HepG2 (cell line): ENCODE measurements at regions of chr12 and their contacts with region 1.

Region 1: DNA sequence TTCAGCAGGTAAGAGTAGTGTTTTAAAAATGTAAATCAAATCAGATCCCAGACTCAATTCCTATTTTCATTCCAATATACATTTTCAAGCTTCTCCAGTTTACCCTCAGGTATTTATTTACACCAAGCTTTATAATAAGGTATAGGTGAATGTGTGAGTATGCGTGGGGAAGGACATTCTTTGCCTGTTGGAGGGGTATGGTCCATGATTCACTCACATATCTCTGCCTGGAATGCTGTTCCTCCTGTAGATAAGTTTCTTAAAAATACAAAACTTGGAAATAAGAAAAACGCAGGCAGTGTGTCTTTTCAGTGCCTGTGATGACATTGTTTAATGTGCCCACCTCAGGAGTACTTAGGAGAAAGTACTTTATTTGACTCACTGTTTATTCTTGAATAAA is 118.6 kb downstream of the CCDC91 start:
- DNase-seq: no peak
- ATAC-seq: no peak
- H3K4me3 ChIP-seq: no peak overlapping the region
- H3K27ac ChIP-seq: no peak overlapping the region
- H3K4me1 ChIP-seq: no peaks in the 10 kb centered on the region
- H3K27me3 ChIP-seq: no peaks in the 10 kb centered on the region
- CTCF ChIP-seq: no peak
- EP300 ChIP-seq: no peak
- POLR2A ChIP-seq: no peak
- RAD21 ChIP-seq: no peak

Region 2: DNA sequence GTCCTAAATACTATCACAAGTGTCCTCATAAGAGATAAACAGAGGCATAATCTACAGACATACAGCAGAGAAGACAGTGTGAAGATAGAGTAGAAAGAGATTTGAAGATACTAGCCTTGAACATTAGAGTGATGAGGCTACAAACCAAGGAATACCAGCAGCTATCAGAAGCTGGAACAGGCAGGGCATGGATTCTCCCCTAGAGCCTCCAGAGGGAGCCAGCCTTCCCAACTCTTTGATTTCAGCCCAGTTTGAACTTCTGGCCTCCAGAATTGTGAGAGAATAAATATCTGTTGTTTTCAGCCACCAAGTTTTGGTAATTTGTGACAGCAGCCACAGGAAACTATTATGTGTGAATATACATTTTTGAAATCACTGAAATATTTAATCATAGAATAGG is 71.5 kb before region 1 on chr12:
- CTCF ChIA-PET with region 1: no interaction called
- POLR2A ChIA-PET with region 1: no interaction called
- in situ Hi-C with region 1: no loop called
- intact Hi-C with region 1: no loop called
- DNase-seq: peak; percentile 2
- ATAC-seq: peak; percentile 71
- H3K4me3 ChIP-seq: no peak overlapping the region
- H3K27ac ChIP-seq: no peak overlapping the region
- H3K4me1 ChIP-seq: no peaks in the 10 kb centered on the region
- H3K27me3 ChIP-seq: no peaks in the 10 kb centered on the region
- CTCF ChIP-seq: peak; percentile 45; the same call in 1 of the 2 replicates
- EP300 ChIP-seq: no peak
- POLR2A ChIP-seq: no peak
- RAD21 ChIP-seq: no peak

Region 3: DNA sequence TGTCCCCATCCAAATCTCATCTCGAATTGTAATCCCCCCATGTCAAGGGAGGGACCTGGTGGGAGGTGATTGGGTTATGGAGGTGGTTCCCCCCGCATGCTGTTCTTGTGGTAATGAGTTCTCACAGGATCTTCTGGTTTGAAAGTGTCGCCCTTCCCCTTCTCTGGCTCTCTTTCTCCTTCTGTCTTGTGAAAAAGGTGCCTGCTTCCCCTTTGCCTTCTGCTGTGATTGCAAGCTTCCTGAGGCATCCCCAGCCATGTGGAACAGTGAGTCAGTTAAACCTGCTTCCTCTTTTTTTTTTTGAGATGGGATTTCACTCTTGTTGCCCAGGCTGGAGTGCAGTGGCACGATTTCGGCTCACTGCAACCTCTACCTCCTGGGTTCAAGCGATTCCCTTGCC is 14.6 kb before region 1 on chr12:
- CTCF ChIA-PET with region 1: no interaction called
- POLR2A ChIA-PET with region 1: no interaction called
- in situ Hi-C with region 1: no loop called
- intact Hi-C with region 1: loop called (anchors 1 kb)
- DNase-seq: no peak
- ATAC-seq: no peak
- H3K4me3 ChIP-seq: no peak overlapping the region
- H3K27ac ChIP-seq: no peak overlapping the region
- H3K4me1 ChIP-seq: no peaks in the 10 kb centered on the region
- H3K27me3 ChIP-seq: no peaks in the 10 kb centered on the region
- CTCF ChIP-seq: no peak
- EP300 ChIP-seq: no peak
- POLR2A ChIP-seq: no peak
- RAD21 ChIP-seq: no peak